ENCODE measurements at regions of chr4 and their contacts with region 1.

Region 1: DNA sequence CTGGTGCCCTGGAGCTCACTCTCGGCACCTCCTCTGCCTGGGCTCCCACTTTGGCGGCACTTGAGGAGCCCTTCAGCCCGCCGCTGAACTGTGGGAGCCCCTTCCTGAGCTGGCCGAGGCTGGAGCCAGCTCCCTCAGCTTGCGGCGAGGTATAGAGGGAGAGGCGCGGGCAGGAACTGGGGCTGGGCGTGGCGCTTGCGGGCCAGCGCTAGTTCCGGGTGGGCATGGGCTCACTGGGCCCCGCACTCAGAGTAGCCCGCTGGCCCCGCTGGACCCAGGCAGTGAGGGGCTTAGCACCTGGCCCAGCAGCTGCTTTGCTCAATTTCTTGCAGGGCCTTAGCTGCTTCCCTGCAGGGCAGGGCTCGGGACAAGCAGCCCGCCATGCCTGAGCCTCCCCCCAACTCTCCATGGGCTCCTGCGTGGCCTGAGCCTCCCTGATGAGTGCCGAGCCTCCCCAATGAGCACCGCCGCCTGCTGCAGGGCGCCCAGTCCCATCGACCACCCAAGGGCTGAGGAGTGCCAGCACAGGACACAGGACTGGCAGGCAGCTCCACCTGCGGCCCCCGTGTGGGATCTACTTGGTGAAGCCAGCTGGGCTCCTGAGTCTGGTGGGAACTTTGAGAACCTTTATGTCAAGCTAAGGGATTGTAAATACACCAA is 26.7 kb upstream of the FAM90A26 start:
- DNase-seq: no peak
- ATAC-seq: no peak
- H3K4me3 ChIP-seq: no peak overlapping the region
- H3K27ac ChIP-seq: no peak overlapping the region
- H3K4me1 ChIP-seq: no peaks in the 10 kb centered on the region
- H3K27me3 ChIP-seq: no peaks in the 10 kb centered on the region
- CTCF ChIP-seq: no peak
- EP300 ChIP-seq: no peak
- POLR2A ChIP-seq: no peak
- RAD21 ChIP-seq: no peak

Region 2: DNA sequence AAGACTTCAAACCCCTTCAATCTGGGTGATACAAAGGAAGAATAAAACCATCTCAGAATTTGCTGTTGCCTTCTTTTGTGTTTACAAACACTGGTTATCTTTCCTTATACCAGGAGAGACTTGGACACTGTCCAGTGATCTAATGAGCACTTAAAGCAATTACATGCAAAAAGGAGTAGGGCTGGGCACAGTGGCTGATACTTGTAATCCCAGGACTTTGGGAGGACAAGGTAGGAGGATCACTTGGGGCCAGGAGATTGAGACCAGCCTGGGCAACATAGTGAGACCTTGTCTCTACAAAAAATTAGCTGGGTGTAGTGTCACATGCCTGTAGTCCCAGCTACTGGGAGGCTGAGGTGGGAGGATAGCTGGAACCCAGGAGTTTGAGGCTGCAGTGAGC is 542.1 kb after region 1 on chr4:
- CTCF ChIA-PET with region 1: no interaction called
- POLR2A ChIA-PET with region 1: no interaction called
- in situ Hi-C with region 1: loop called (anchors 10 kb)
- intact Hi-C with region 1: no loop called
- DNase-seq: no peak
- ATAC-seq: no peak
- H3K4me3 ChIP-seq: no peak overlapping the region
- H3K27ac ChIP-seq: no peak overlapping the region
- H3K4me1 ChIP-seq: no peaks in the 10 kb centered on the region
- H3K27me3 ChIP-seq: no peaks in the 10 kb centered on the region
- CTCF ChIP-seq: no peak
- EP300 ChIP-seq: no peak
- POLR2A ChIP-seq: no peak
- RAD21 ChIP-seq: no peak